ENCODE measurements at regions of chr12 and their contacts with region 1.

Region 1: GRCh38 chr12:5428332-5429221 is 3.3 kb upstream of the NTF3 start:
- DNase-seq: no peak

Region 2: GRCh38 chr12:5379744-5380496 is 48.7 kb before region 1 on chr12:
- intact Hi-C with region 1: no loop called
- DNase-seq: no peak

Region 3: GRCh38 chr12:5467931-5468330 is 39.4 kb after region 1 on chr12:
- intact Hi-C with region 1: loop called in 1 of 2 experiments (anchors 1 kb)
- DNase-seq: no peak

Region 4: DNA sequence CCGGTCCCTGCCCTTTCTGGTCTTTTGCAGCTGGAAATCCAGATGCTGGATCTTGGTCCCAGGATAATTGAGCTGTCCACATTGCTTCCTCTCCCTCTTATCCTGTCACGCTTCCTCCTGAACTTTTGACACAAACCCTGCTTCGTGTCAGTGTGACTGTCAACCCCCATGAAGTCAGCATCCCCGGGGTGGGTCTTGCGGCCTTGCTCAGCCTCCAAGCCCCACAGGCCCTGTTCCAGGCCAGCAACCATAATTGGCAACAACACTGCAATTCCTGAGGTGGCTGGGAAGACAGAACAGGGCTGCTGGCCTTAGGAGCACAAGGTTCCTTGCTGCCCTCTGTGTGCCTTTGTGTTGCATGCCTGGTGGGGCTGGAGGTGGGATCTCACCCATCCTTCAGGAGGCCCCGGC is 78.2 kb after region 1 on chr12:
- intact Hi-C with region 1: loop called in 1 of 2 experiments (anchors 5 kb)
- DNase-seq: no peak

Region 5: GRCh38 chr12:5650829-5651461 is 222.4 kb after region 1 on chr12:
- intact Hi-C with region 1: loop called in 1 of 2 experiments (anchors 10 kb)
- DNase-seq: no peak

Region 6: GRCh38 chr12:6067152-6067916 is 638.8 kb after region 1 on chr12:
- intact Hi-C with region 1: no loop called
- DNase-seq: no peak

Measured in posterior vena cava (tissue), 2 donors.